CD8-positive, alpha-beta T cell (primary cell): ENCODE measurements at regions of chr15 and their contacts with region 1.

Region 1: DNA sequence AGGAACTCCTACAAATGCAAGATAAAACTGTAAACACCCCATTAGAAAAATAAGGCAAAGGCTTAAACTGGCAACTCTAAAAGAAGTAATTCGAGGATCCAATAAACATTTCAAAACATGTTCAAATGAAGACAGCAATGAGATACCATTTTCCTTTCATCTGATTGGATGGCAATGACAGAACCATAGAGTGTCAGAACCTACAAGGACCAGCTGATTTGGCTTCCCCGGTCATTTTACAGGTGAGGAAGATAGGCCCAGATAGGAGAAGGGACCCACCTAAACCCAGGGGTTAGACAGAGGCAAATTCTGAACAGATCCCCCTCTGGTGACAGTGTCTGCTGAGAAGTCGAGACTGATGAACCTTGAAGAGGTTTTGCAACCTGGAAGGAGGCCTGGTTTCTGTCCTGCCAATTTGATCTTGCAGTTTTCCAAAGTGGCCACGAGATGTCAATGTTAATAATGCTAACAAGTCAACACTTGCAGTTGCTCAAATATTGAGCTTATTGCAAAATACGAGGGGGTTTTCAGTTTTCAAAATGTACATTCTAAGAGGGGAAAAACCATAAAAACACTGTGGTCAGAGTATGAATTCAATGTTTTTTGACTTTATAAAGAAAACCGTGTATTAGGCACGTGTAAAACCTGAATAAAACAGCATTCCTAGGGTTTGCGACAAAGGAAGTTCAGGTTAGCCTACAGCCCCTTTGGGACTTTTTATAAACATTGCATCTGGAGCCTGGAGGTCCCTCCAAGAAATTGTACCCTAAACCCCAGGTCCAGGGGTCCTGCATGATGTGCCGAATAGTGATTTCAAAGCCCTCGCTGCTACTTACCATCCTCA is 21.5 kb downstream of the CFAP161 start:
- DNase-seq: peak in 4 of 9 experiments; percentile 11 to 50 (median 42)
- ATAC-seq: no peak
- H3K4me3 ChIP-seq: no peak overlapping the region
- H3K4me3 Mint-ChIP-seq: no peak overlapping the region
- H3K27ac ChIP-seq: no peak overlapping the region
- H3K27ac Mint-ChIP-seq: no peak overlapping the region
- H3K4me1 ChIP-seq: no peaks in the 10 kb centered on the region
- H3K4me1 Mint-ChIP-seq: no peaks in the 10 kb centered on the region
- H3K27me3 ChIP-seq: no peaks in the 10 kb centered on the region
- H3K27me3 Mint-ChIP-seq: peaks cover 4% of the 10 kb centered on the region
- CTCF ChIP-seq: peak; percentile 40

Region 2: GRCh38 chr15:80588801-80589200 is 566.8 kb before region 1 on chr15:
- CTCF ChIA-PET with region 1: no interaction called
- POLR2A ChIA-PET with region 1: no interaction called
- intact Hi-C with region 1: no loop called
- DNase-seq: no peak
- ATAC-seq: no peak
- H3K4me3 ChIP-seq: no peak overlapping the region
- H3K4me3 Mint-ChIP-seq: no peak overlapping the region
- H3K27ac ChIP-seq: no peak overlapping the region
- H3K27ac Mint-ChIP-seq: no peak overlapping the region
- H3K4me1 ChIP-seq: no peaks in the 10 kb centered on the region
- H3K4me1 Mint-ChIP-seq: no peaks in the 10 kb centered on the region
- H3K27me3 ChIP-seq: no peaks in the 10 kb centered on the region
- H3K27me3 Mint-ChIP-seq: peaks cover 6% of the 10 kb centered on the region
- CTCF ChIP-seq: no peak

Region 3: GRCh38 chr15:81170511-81170910 is 14.9 kb after region 1 on chr15:
- CTCF ChIA-PET with region 1: interaction called, 13 read pairs
- POLR2A ChIA-PET with region 1: no interaction called
- intact Hi-C with region 1: no loop called
- DNase-seq: no peak
- ATAC-seq: no peak
- H3K4me3 ChIP-seq: no peak overlapping the region
- H3K4me3 Mint-ChIP-seq: no peak overlapping the region
- H3K27ac ChIP-seq: no peak overlapping the region
- H3K27ac Mint-ChIP-seq: no peak overlapping the region
- H3K4me1 ChIP-seq: no peaks in the 10 kb centered on the region
- H3K4me1 Mint-ChIP-seq: no peaks in the 10 kb centered on the region
- H3K27me3 ChIP-seq: no peaks in the 10 kb centered on the region
- H3K27me3 Mint-ChIP-seq: peaks cover 12% of the 10 kb centered on the region
- CTCF ChIP-seq: no peak

Region 4: DNA sequence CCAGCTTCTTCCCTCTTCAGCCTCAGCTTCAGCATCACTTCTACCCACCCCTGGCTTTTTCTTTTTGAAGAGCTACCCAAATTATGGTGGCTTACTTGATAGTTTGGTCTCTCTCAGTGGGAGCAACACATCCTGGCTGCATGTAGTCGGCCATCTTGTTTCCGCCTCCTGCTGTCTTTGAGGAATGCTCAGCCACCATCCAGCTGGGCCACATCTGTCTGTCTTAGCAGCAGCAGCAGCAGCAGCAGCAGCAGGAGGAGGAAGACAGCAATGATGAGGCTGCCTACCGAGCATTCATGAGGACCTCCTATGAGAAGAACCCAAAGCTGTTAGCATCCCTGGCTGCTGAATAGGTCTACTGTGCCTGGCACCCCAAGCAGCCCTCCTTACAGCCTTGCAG is 60.8 kb after region 1 on chr15:
- CTCF ChIA-PET with region 1: no interaction called
- POLR2A ChIA-PET with region 1: no interaction called
- intact Hi-C with region 1: no loop called
- DNase-seq: no peak
- ATAC-seq: no peak
- H3K4me3 ChIP-seq: no peak overlapping the region
- H3K4me3 Mint-ChIP-seq: no peak overlapping the region
- H3K27ac ChIP-seq: no peak overlapping the region
- H3K27ac Mint-ChIP-seq: no peak overlapping the region
- H3K4me1 ChIP-seq: no peaks in the 10 kb centered on the region
- H3K4me1 Mint-ChIP-seq: no peaks in the 10 kb centered on the region
- H3K27me3 ChIP-seq: no peaks in the 10 kb centered on the region
- H3K27me3 Mint-ChIP-seq: no peaks in the 10 kb centered on the region
- CTCF ChIP-seq: no peak

Region 5: DNA sequence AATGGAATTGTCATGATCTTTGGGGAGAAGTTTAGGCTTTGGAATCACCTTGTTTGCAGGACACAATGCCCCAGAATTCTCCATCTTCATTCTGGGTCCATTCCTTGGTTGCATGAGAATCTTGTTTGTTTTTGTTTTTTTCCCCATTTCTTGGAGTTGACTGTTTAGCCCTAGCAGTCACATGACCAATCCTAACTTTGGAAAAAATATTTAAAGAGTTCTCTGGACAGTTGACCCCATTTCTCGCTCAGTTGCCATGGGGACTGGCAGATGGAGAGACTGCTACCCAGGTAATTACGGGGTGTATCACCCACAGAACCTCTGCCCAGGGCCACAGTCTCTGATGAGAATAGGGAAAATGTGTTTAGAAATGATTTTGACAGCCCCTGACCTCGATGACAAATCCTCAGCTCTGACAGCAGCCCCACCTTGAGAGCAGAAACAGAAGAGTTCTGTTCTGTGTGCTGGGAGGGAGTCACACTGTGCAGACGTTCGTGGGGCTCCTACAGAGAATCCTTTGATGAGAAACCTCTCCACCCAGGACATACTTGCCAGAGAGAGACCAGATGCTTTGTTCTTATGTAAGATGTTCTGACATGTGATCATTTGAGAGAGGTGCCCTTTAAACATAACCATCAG is 98.8 kb after region 1 on chr15:
- CTCF ChIA-PET with region 1: no interaction called
- POLR2A ChIA-PET with region 1: no interaction called
- intact Hi-C with region 1: loop called in 1 of 2 experiments (anchors 5 kb)
- DNase-seq: peak in 1 of 9 experiments; percentile 44
- ATAC-seq: no peak
- H3K4me3 ChIP-seq: no peak overlapping the region
- H3K4me3 Mint-ChIP-seq: no peak overlapping the region
- H3K27ac ChIP-seq: no peak overlapping the region
- H3K27ac Mint-ChIP-seq: no peak overlapping the region
- H3K4me1 ChIP-seq: no peaks in the 10 kb centered on the region
- H3K4me1 Mint-ChIP-seq: no peaks in the 10 kb centered on the region
- H3K27me3 ChIP-seq: peaks cover 0 to 6% of the 10 kb centered on the region in 2 experiments
- H3K27me3 Mint-ChIP-seq: peaks cover 8% of the 10 kb centered on the region
- CTCF ChIP-seq: no peak

Region 6: DNA sequence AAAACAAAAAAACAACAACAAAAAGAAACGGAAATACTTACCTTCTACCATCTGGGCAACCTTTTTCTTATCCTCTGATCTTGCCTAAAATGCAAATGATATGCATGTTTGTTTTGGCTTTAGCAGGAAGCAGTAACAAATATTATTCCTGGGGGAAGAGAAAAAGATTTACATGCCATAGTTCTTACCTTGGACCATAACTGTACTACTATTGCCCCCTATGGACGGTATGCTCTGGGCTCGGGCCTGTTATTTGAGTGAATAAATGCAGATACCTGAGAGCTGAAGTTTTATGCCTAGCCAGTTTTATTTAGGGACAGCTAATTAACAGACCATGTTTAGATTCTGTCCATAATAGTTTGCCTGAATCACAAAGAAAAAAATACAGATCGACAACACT is 181.0 kb after region 1 on chr15:
- CTCF ChIA-PET with region 1: interaction called, 7 read pairs
- POLR2A ChIA-PET with region 1: no interaction called
- intact Hi-C with region 1: loop called (anchors 1 to 5 kb)
- DNase-seq: peak in 7 of 9 experiments; percentile 28 to 69 (median 46)
- ATAC-seq: peak; percentile 49
- H3K4me3 ChIP-seq: no peak overlapping the region
- H3K4me3 Mint-ChIP-seq: no peak overlapping the region
- H3K27ac ChIP-seq: no peak overlapping the region
- H3K27ac Mint-ChIP-seq: no peak overlapping the region
- H3K4me1 ChIP-seq: no peaks in the 10 kb centered on the region
- H3K4me1 Mint-ChIP-seq: peaks cover 15% of the 10 kb centered on the region
- H3K27me3 ChIP-seq: no peaks in the 10 kb centered on the region
- H3K27me3 Mint-ChIP-seq: no peaks in the 10 kb centered on the region
- CTCF ChIP-seq: peak; percentile 37

Region 7: DNA sequence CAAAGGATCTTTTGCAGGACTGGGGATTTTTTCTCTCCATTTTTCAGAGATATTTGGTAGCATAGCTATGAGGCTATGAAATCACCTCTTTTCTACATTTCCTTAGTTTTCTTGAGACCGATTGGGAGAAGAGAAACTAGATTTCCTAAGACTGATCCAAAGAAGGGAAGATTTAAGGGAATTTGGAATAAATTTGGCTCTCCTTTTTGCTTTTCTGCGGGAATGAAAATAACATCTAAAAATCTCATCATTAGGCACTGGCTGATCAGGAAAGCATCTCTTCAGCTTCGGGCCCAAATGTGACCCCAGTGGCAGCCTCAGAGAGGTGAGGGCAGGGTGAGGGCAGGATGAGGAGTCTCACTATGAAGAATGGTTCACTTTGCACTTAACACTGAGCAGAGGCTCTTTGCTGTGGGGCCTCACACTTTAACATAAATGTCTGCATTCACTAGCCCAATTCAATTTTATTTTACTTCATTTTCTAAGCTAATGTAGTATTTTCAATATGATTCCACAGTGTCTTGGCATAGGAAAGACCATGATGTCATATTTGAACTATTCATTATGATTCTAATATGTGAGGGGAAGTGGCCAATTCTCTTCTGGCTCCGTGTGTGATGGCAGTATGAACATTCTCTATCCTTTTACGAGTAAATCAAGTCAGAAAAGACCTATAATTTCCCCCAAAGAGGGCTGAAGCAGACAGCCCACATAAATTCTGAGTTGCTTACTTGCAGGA is 697.0 kb after region 1 on chr15:
- CTCF ChIA-PET with region 1: no interaction called
- POLR2A ChIA-PET with region 1: no interaction called
- intact Hi-C with region 1: no loop called
- DNase-seq: no peak
- ATAC-seq: no peak
- H3K4me3 ChIP-seq: no peak overlapping the region
- H3K4me3 Mint-ChIP-seq: no peak overlapping the region
- H3K27ac ChIP-seq: no peak overlapping the region
- H3K27ac Mint-ChIP-seq: no peak overlapping the region
- H3K4me1 ChIP-seq: no peaks in the 10 kb centered on the region
- H3K4me1 Mint-ChIP-seq: no peaks in the 10 kb centered on the region
- H3K27me3 ChIP-seq: no peaks in the 10 kb centered on the region
- H3K27me3 Mint-ChIP-seq: no peaks in the 10 kb centered on the region
- CTCF ChIP-seq: no peak

Region 8: GRCh38 chr15:82306791-82307713 is 1151.5 kb after region 1 on chr15:
- CTCF ChIA-PET with region 1: no interaction called
- POLR2A ChIA-PET with region 1: no interaction called
- intact Hi-C with region 1: no loop called
- DNase-seq: no peak
- ATAC-seq: no peak
- H3K4me3 ChIP-seq: no peak overlapping the region
- H3K4me3 Mint-ChIP-seq: no peak overlapping the region
- H3K27ac ChIP-seq: no peak overlapping the region
- H3K27ac Mint-ChIP-seq: no peak overlapping the region
- H3K4me1 ChIP-seq: no peaks in the 10 kb centered on the region
- H3K4me1 Mint-ChIP-seq: peaks cover 9% of the 10 kb centered on the region
- H3K27me3 ChIP-seq: no peaks in the 10 kb centered on the region
- H3K27me3 Mint-ChIP-seq: no peaks in the 10 kb centered on the region
- CTCF ChIP-seq: no peak